Right ventricle myocardium inferior (tissue), 1 donor: ENCODE measurements at regions of chr9 and their contacts with region 1.

Region 1: DNA sequence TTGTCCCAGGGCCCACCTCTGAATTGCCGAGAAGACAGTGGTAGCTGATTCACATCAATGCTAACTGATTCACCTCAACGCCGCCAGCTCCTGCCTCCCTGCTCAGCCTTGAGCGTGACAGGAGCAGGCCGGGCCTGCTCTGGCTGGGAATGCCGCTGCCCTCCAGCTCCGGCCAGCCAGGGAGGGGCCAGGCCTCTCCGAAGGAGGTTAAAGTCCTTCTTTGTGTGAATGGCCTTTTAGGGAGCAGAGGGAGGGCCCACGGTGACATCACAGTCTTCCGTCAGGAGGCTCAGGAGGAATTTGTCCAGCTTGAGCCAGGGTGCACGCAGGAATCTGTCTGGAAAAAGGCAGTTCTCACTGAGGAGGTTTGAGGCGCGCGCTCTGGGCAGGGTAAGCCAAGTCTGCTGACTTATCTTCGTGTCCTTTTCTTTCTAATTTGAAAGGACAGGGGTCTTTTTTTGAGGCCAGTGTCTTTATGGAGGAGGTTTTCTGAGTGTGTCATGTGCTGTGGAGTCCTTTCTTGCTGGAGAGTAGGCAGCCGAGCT is 82.7 kb downstream of the C9orf152 start:
- DNase-seq: peak; percentile 89
- ATAC-seq: peak; percentile 90

Region 2: GRCh38 chr9:109868207-109868606 is 257.1 kb before region 1 on chr9:
- intact Hi-C with region 1: loop called (anchors 5 kb)
- DNase-seq: no peak
- ATAC-seq: peak; percentile 59

Region 3: GRCh38 chr9:110069326-110070248 is 55.7 kb before region 1 on chr9:
- intact Hi-C with region 1: loop called (anchors 5 kb)
- DNase-seq: no peak
- ATAC-seq: peak; percentile 52

Region 4: GRCh38 chr9:110088099-110088498 is 37.2 kb before region 1 on chr9:
- intact Hi-C with region 1: loop called (anchors 5 kb)
- DNase-seq: no peak
- ATAC-seq: no peak